Colonic mucosa (tissue), 4 donors: ENCODE measurements at regions of chr1 and their contacts with region 1.

Region 1: DNA sequence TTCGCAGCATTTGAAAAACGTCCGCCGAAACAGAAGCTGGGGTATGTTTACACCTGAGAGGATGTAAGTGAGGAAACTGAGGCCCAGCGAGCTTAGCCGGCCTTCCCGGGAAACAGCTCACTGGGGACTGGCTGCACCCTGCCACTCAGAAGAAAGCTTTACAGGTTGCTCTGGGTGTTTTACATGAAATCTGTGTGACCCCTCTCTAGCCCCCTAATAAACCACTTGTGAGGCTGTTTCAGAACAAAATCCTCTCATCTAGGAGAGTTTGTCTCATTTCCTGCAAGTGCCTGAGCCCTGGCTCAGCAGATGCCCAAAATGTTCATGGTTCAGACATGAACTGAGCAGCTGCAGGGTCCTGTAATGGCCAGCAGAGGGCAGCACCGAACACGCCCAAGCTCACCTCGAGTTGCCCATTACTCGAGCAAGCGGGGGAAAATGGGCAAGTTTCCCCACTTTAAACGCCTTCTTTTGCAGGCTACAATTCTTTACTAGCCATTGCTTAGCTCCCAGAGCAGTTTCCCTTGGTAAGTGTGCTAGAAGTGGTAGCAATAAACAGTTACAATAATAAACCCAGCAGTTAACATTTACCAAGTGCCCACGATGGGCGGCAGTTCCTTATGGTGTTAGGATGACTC is 76.4 kb downstream of the FHAD1 start:
- DNase-seq: peak; percentile 88
- H3K4me3 ChIP-seq: peak overlapping the region; percentile 9
- H3K27ac ChIP-seq: no peak overlapping the region
- H3K4me1 ChIP-seq: peaks cover 13% of the 10 kb centered on the region
- H3K27me3 ChIP-seq: no peaks in the 10 kb centered on the region
- CTCF ChIP-seq: peak; percentile 99

Region 2: DNA sequence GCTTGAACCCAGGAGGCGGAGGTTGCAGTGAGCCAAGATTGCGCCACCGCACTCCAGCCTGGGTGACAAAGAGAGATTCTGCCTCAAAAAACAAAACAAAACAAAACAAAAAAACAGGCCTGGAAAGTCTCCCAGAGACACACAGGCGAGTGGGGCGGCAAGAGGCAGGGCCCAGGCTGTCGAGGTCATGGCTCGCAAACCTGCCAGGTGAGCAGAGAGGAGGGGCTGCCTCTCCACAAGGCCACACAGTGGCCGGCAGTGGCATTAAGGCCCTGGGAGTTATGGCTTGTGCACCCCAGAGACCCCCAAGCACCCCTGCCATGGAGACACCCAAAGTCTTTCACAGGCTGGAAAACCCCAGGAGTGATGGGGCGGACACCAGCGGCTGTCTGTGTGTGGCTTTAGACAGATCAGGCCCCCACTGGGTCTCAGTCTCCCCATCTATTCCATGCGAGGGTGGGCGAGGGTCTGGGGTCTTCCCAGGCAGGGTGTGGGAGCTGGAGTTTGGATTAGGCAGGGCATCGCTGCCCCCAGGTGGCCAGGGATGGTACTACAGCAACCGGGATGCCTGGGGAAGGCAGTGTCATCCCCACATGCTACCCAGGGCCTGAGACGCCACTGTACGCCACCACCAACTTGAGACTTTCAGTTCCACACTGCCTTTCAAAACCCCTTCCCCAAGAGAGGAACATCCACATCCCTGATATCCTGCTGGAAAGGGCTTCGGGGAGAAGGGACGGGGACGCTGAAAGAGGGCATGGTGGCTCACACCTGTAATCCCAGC is 107.5 kb after region 1 on chr1:
- intact Hi-C with region 1: loop called (anchors 2 kb)
- DNase-seq: peak; percentile 86
- H3K4me3 ChIP-seq: no peak overlapping the region
- H3K27ac ChIP-seq: no peak overlapping the region
- H3K4me1 ChIP-seq: peaks cover 8% of the 10 kb centered on the region
- H3K27me3 ChIP-seq: no peaks in the 10 kb centered on the region
- CTCF ChIP-seq: peak; percentile 94

Region 3: DNA sequence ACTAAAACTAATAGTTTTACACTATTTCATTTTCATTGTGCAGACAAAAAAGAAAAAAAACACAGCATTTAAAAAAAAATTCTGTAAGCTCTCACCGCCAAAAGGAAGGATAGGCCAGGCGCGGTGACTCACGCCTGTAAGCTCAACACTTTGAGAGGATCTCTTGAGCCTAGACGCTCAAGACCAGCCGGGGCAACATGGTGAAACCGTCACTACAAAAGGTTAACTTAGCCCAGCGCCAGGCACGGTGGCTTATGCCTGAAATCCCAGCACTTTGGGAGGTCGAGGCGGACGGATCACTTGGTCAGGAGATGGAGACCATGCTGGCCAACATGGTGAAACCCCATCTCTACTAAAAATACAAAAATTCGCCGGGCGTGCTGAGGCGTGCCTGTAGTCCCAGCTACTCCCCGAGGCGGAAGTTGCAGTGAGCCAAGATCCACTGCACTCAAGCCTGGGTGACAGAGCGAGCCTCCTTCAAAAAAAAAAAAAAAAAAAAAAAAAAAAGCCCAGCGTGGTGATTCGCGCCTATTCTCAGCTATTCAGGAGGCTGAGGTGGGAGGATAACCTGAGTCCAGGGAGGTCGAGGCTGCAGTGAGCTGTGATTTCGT is 509.7 kb after region 1 on chr1:
- intact Hi-C with region 1: no loop called
- DNase-seq: peak; percentile 65
- H3K4me3 ChIP-seq: peak overlapping the region; percentile 81
- H3K27ac ChIP-seq: peak overlapping the region; percentile 100
- H3K4me1 ChIP-seq: no peaks in the 10 kb centered on the region
- H3K27me3 ChIP-seq: no peaks in the 10 kb centered on the region
- CTCF ChIP-seq: no peak